ENCODE measurements at regions of chr2 and their contacts with region 1.

Region 1: GRCh38 chr2:100730346-100730745 is 89.6 kb upstream of the NPAS2 start:
- DNase-seq: peak; percentile 68 to 84 (median 75)
- H3K4me3 ChIP-seq: no peak overlapping the region
- H3K27ac ChIP-seq: no peak overlapping the region
- H3K4me1 ChIP-seq: peaks cover 6 to 14% of the 10 kb centered on the region in 2 donors
- H3K27me3 ChIP-seq: no peaks in the 10 kb centered on the region
- CTCF ChIP-seq: peak; percentile 30 to 76 (median 76)
- POLR2A ChIP-seq: no peak

Region 2: DNA sequence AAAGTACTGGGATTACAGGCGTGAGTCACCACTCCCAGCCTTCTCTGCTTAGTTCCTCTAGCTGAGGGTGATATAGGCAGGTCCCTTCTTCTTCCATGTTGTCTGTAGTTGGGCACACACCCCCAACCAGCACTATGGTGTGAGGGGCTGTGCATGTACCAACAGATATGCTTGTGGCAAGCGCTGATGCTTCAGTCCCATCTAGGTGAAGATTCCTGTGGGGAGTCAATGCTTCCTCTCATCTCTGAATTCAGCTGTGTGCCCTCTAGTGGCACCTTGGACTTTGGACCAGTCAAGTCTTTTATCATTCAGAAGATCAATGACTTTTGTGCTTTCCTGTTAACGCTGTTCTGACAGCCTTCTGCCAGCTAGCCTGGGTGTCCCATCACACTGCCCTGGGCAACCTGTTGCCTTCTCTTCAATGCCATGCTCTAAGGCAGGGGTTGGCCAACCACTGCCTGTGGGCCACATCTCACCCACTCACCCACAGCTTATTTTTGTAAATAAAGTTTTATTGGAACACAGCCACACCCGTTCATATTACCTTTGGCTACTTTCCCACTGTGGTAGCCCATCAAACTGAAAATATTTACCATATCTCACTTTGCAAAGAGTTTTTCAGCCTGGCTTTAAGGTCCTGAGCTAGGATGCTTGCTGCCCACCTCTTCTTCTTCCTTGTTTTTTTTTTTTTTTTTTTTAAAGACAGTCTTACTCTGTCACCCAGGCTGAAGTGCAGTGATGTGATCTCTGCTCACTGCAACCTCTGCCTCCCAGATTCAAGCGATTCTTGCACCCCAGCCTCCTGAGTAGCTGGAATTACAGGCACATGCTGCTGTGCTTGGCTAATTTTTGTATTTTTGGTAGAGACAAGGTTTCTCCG is 140.5 kb after region 1 on chr2:
- intact Hi-C with region 1: loop called in 1 of 2 experiments (anchors 10 kb)
- DNase-seq: peak in 1 of 7 donors; percentile 38
- H3K4me3 ChIP-seq: no peak overlapping the region
- H3K27ac ChIP-seq: no peak overlapping the region
- H3K4me1 ChIP-seq: peaks cover 0 to 6% of the 10 kb centered on the region in 2 donors
- H3K27me3 ChIP-seq: no peaks in the 10 kb centered on the region
- CTCF ChIP-seq: peak in 3 of 6 experiments; percentile 22 to 32 (median 29)
- POLR2A ChIP-seq: no peak

Region 3: DNA sequence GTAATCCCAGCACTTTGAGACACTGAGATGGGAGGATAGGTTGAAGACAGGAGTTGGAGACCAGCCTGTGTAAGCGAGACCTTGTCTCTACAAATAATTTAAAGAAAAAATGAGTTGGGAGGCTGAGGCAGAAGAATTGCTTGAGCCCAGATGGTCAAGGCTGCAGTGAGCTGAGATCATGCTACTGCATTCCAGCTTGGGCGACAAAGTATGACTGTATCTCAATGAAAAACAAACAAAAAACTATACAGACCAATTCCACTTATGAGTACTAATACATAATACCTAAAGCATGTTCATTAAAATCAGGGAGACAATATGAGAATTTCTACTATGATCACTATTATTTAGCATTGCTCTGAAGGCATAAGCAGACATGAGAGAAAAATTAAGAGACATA is 565.5 kb after region 1 on chr2:
- intact Hi-C with region 1: no loop called
- DNase-seq: peak in 2 of 7 donors; percentile 19 to 36
- H3K4me3 ChIP-seq: no peak overlapping the region
- H3K27ac ChIP-seq: no peak overlapping the region
- H3K4me1 ChIP-seq: peaks cover 9 to 46% of the 10 kb centered on the region in 2 donors
- H3K27me3 ChIP-seq: no peaks in the 10 kb centered on the region
- CTCF ChIP-seq: no peak
- POLR2A ChIP-seq: no peak

Measured in adrenal gland (tissue), 19 donors.